B cell (primary cell): ENCODE measurements at regions of chr1 and their contacts with region 1.

Region 1: DNA sequence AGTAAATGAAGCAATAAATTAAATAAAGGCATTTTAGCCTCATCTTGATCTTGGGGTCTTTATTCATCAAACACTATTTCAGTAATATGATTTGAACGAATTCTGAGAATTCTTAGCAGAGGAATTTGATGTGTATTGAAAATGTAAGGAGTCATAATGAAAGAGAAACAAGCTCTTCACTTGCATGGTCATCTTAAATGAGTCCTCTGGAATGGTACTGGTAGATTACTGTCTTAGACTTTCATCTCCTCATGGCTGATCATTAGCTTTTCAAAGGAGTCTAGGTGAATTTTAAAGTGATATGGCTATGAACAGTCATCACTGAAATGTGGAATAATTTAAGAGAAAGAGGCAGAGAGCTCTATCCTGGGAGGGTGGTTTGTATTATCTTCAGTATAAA is 30.0 kb downstream of the PRRC2C start:
- DNase-seq: no peak
- ATAC-seq: no peak
- H3K4me3 ChIP-seq: no peak overlapping the region
- H3K4me3 Mint-ChIP-seq: no peak overlapping the region
- H3K27ac ChIP-seq: peak overlapping the region in 1 of 2 donors; percentile 19
- H3K27ac Mint-ChIP-seq: no peak overlapping the region
- H3K4me1 ChIP-seq: peaks cover 0 to 4% of the 10 kb centered on the region in 2 donors
- H3K4me1 Mint-ChIP-seq: peaks cover 18% of the 10 kb centered on the region
- H3K27me3 ChIP-seq: no peaks in the 10 kb centered on the region
- H3K27me3 Mint-ChIP-seq: no peaks in the 10 kb centered on the region
- CTCF ChIP-seq: no peak

Region 2: GRCh38 chr1:171468120-171469035 is 46.9 kb before region 1 on chr1:
- CTCF ChIA-PET with region 1: no interaction called
- POLR2A ChIA-PET with region 1: no interaction called
- intact Hi-C with region 1: no loop called
- DNase-seq: no peak
- ATAC-seq: no peak
- H3K4me3 ChIP-seq: no peak overlapping the region
- H3K4me3 Mint-ChIP-seq: no peak overlapping the region
- H3K27ac ChIP-seq: no peak overlapping the region
- H3K27ac Mint-ChIP-seq: no peak overlapping the region
- H3K4me1 ChIP-seq: no peaks in the 10 kb centered on the region
- H3K4me1 Mint-ChIP-seq: no peaks in the 10 kb centered on the region
- H3K27me3 ChIP-seq: no peaks in the 10 kb centered on the region
- H3K27me3 Mint-ChIP-seq: peaks cover 9% of the 10 kb centered on the region
- CTCF ChIP-seq: no peak

Region 3: DNA sequence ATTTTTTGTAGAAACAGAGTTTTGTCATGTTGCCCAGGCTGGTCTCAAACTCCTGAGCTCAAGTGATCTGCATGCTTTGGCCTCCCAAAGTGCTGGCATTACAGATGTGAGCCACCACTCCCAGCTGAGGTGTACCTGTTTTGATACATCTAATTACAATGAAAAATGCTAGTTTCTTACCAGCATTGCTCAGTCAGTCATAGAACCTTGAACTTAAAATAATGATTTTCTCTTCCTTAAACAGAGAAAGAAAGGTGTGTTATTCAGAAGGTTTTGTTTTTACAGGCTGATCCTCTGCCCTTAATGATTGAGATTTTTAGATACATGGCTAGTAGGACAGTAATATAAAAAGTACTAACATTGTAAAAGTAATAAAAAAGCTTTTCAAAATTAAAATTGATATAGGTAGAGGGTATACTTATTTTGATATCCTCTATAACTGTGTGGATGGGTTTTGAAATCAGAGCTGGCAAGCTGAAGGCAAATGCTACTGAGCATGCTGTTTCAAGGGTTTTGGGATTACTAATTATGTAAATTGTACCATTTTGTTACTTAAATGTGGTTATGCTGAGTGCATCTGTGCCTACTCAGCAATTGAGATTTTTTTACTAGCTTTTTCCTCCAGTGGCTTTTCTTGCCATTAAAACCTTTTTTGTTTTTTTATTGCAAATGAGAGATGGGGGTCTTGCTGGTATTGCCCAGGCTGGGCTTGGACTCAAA is 13.8 kb before region 1 on chr1:
- CTCF ChIA-PET with region 1: no interaction called
- POLR2A ChIA-PET with region 1: no interaction called
- intact Hi-C with region 1: no loop called
- DNase-seq: no peak
- ATAC-seq: no peak
- H3K4me3 ChIP-seq: no peak overlapping the region
- H3K4me3 Mint-ChIP-seq: no peak overlapping the region
- H3K27ac ChIP-seq: peak overlapping the region in 1 of 2 donors; percentile 24
- H3K27ac Mint-ChIP-seq: no peak overlapping the region
- H3K4me1 ChIP-seq: peaks cover 23 to 32% of the 10 kb centered on the region in 2 donors
- H3K4me1 Mint-ChIP-seq: peaks cover 81% of the 10 kb centered on the region
- H3K27me3 ChIP-seq: no peaks in the 10 kb centered on the region
- H3K27me3 Mint-ChIP-seq: no peaks in the 10 kb centered on the region
- CTCF ChIP-seq: no peak

Region 4: GRCh38 chr1:171576144-171576543 is 60.8 kb after region 1 on chr1:
- CTCF ChIA-PET with region 1: no interaction called
- POLR2A ChIA-PET with region 1: no interaction called
- intact Hi-C with region 1: loop called (anchors 10 kb)
- DNase-seq: no peak
- ATAC-seq: no peak
- H3K4me3 ChIP-seq: no peak overlapping the region
- H3K4me3 Mint-ChIP-seq: no peak overlapping the region
- H3K27ac ChIP-seq: peak overlapping the region in 1 of 2 donors; percentile 1
- H3K27ac Mint-ChIP-seq: no peak overlapping the region
- H3K4me1 ChIP-seq: no peaks in the 10 kb centered on the region
- H3K4me1 Mint-ChIP-seq: no peaks in the 10 kb centered on the region
- H3K27me3 ChIP-seq: no peaks in the 10 kb centered on the region
- H3K27me3 Mint-ChIP-seq: no peaks in the 10 kb centered on the region
- CTCF ChIP-seq: no peak